Activated CD8-positive, alpha-beta T cell treated with anti-CD3 and anti-CD28 coated beads for 36 hours (primary cell): ENCODE measurements at regions of chr12 and their contacts with region 1.

Region 1: GRCh38 chr12:9869307-9870161 is at the start of gene CLEC2B:
- DNase-seq: peak; percentile 70
- ATAC-seq: peak; percentile 68
- H3K4me3 Mint-ChIP-seq: peak within 1 kb of the TSS; percentile 85
- H3K27ac Mint-ChIP-seq: peak within 1 kb of the TSS; percentile 89
- H3K4me1 Mint-ChIP-seq: peaks cover 23% of the 10 kb centered on the region
- H3K27me3 Mint-ChIP-seq: no peaks in the 10 kb centered on the region
- CTCF ChIP-seq: no peak
- total RNA-seq, gene CLEC2B: 38.4 to 43.2 TPM

Region 2: GRCh38 chr12:9647825-9648700 is 221.5 kb before region 1 on chr12:
- CTCF ChIA-PET with region 1: no interaction called
- POLR2A ChIA-PET with region 1: interaction called, 30 read pairs
- intact Hi-C with region 1: no loop called
- DNase-seq: peak; percentile 95
- ATAC-seq: peak; percentile 72
- H3K4me3 Mint-ChIP-seq: peak overlapping the region; percentile 98
- H3K27ac Mint-ChIP-seq: peak overlapping the region; percentile 99
- H3K4me1 Mint-ChIP-seq: peaks cover 53% of the 10 kb centered on the region
- H3K27me3 Mint-ChIP-seq: no peaks in the 10 kb centered on the region
- CTCF ChIP-seq: no peak

Region 3: DNA sequence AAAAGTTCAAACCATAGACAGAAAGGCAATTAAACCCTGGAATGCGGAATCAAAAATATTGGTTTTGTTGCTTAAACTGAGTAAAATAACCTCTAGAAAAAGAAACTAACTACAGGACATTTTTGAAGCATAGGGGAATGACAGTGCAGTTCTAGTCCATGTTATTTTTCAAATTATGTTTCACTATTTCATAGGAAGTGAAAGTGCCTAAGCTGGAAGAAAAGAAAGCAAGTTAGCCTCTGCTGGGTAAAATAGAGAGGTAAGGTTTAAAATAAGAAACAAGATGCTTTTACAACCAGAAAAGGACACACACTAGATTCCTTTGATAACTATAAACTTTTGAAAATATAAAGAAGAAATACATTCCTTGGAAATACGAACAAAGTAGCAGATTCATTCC is 137.7 kb before region 1 on chr12:
- CTCF ChIA-PET with region 1: no interaction called
- POLR2A ChIA-PET with region 1: no interaction called
- intact Hi-C with region 1: no loop called
- DNase-seq: no peak
- ATAC-seq: peak; percentile 65
- H3K4me3 Mint-ChIP-seq: peak overlapping the region; percentile 76
- H3K27ac Mint-ChIP-seq: peak overlapping the region; percentile 88
- H3K4me1 Mint-ChIP-seq: peaks cover 46% of the 10 kb centered on the region
- H3K27me3 Mint-ChIP-seq: no peaks in the 10 kb centered on the region
- CTCF ChIP-seq: no peak

Region 4: DNA sequence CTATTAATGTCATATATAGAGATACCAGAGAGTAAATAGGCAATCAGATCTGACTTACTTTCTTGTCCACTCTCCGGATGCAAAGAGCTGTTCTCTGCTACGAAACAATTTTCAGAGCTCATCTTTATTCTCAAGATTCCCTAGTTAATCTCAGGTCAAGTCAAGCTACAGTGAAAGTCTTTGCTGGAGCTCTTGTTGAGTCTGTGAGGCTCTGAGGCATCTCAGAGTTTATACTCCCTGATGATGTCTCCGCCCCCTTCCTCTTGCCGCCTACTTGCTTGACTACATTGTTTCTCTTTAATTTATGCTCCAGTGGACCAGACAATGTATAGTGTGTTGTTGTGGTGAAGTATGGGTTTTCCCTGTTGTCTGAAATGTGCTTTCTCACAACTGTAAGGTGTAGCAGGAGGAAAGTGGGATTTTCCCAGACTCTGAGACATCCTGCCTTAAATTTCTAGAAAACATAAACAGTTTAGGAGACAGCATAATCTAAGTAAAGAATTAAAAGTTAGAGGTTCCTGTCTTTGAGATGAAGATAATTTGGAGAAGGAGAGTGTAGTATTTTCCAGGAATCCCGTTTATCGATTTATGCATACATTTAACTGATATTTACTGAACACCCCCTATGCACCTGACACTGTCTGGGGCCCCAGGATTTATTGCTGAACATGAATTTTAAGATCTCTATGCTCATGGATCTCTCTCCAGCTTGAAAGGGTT is 108.7 kb before region 1 on chr12 and contains the start of gene CD69:
- CTCF ChIA-PET with region 1: interaction called, 13 read pairs
- POLR2A ChIA-PET with region 1: interaction called, 292 read pairs
- intact Hi-C with region 1: no loop called
- DNase-seq: peak; percentile 89
- ATAC-seq: peak; percentile 57
- H3K4me3 Mint-ChIP-seq: peak within 1 kb of the TSS; percentile 97
- H3K27ac Mint-ChIP-seq: peak within 1 kb of the TSS; percentile 99
- H3K4me1 Mint-ChIP-seq: peaks cover 34% of the 10 kb centered on the region
- H3K27me3 Mint-ChIP-seq: no peaks in the 10 kb centered on the region
- CTCF ChIP-seq: no peak
- total RNA-seq, gene CD69: 166 to 174 TPM

Region 5: GRCh38 chr12:9797722-9798619 is 71.6 kb before region 1 on chr12:
- CTCF ChIA-PET with region 1: interaction called, 11 read pairs
- POLR2A ChIA-PET with region 1: interaction called, 23 read pairs
- intact Hi-C with region 1: loop called (anchors 5 kb)
- DNase-seq: peak; percentile 84
- ATAC-seq: peak; percentile 83
- H3K4me3 Mint-ChIP-seq: peak overlapping the region; percentile 74
- H3K27ac Mint-ChIP-seq: peak overlapping the region; percentile 86
- H3K4me1 Mint-ChIP-seq: peaks cover 47% of the 10 kb centered on the region
- H3K27me3 Mint-ChIP-seq: no peaks in the 10 kb centered on the region
- CTCF ChIP-seq: peak; percentile 80

Region 6: GRCh38 chr12:9925708-9926393 is 56.3 kb after region 1 on chr12:
- CTCF ChIA-PET with region 1: interaction called, 7 read pairs
- POLR2A ChIA-PET with region 1: no interaction called
- intact Hi-C with region 1: loop called (anchors 5 kb)
- DNase-seq: peak; percentile 7
- ATAC-seq: peak; percentile 73
- H3K4me3 Mint-ChIP-seq: peak overlapping the region; percentile 59
- H3K27ac Mint-ChIP-seq: peak overlapping the region; percentile 73
- H3K4me1 Mint-ChIP-seq: peaks cover 21% of the 10 kb centered on the region
- H3K27me3 Mint-ChIP-seq: no peaks in the 10 kb centered on the region
- CTCF ChIP-seq: peak; percentile 60

Region 7: DNA sequence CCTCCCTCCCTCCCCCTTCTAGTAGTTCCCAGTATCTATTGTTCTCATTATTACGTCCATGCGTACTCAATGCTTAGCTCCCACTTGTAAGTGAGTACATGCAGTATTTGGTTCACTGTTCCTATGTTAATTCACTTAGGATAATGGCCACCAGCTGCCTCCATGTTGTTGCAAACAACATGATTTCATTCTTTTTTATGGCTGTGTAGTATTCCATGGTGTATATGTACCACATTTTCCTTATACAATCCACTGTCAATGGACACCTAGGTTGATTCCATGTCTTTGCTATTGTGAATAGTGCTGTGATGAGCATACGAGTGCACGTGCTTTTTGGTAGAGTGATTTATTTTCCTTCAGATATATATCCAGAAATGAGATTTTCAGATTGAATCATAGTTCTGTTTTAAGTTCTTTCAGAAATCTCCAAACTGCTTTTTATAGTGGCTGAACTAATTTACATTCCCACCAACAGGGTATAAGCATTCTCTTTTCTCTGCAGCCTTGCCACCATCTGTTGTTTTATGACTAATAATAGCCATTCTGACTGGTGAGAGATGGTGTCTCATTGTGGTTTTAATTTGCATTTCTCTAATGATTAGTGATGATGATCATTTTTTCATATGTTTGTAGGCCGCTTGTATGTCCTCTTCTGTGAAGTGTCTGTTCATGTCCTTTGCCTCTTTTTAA is 278.3 kb after region 1 on chr12:
- CTCF ChIA-PET with region 1: no interaction called
- POLR2A ChIA-PET with region 1: no interaction called
- intact Hi-C with region 1: no loop called
- DNase-seq: no peak
- ATAC-seq: no peak
- H3K4me3 Mint-ChIP-seq: no peak overlapping the region
- H3K27ac Mint-ChIP-seq: no peak overlapping the region
- H3K4me1 Mint-ChIP-seq: peaks cover 6% of the 10 kb centered on the region
- H3K27me3 Mint-ChIP-seq: no peaks in the 10 kb centered on the region
- CTCF ChIP-seq: no peak

Region 8: DNA sequence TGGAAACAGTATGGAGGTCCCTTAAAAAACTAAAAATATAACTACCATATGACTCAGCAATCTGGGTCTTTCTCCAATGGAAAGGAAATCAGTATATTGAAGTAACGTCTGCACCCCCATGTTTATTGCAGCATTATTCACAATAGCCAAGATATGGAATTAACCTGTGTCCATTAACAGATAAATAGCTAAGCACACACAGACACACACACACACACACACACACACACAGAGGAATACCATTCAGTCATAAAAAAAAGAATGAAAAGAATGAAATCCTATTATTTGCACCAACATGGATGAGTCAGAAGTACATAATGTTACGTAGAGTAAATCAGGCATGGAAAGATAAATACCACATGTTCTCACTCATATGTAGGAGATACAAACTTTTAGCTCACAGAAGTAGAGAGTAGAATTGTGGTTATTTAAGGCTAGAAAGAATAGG is 515.7 kb after region 1 on chr12:
- CTCF ChIA-PET with region 1: no interaction called
- POLR2A ChIA-PET with region 1: interaction called, 13 read pairs
- intact Hi-C with region 1: no loop called
- DNase-seq: no peak
- ATAC-seq: peak; percentile 68
- H3K4me3 Mint-ChIP-seq: peak overlapping the region; percentile 90
- H3K27ac Mint-ChIP-seq: peak overlapping the region; percentile 92
- H3K4me1 Mint-ChIP-seq: peaks cover 47% of the 10 kb centered on the region
- H3K27me3 Mint-ChIP-seq: no peaks in the 10 kb centered on the region
- CTCF ChIP-seq: no peak